Mammary epithelial cell (primary cell): ENCODE measurements at regions of chr15 and their contacts with region 1.

Region 1: DNA sequence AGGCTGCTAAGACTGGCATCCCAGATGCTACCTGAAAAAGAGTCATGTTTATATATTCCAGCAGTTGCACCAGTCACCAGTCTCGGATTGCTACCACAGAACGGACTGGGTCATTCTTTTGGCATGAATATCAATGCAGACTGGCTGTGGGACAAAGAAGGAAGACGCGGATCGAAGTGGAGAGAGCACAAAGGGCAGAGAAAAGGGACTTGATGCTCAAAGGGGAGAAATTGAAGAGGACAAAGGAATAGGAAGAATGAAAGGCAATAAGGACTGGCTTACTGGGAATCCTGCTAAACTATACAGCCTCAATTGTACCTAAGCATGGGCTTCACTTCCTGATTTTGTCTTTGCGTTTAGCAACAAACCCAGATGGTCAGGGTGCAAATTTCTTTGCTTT is 15.3 kb upstream of the DIS3L start:
- DNase-seq: no peak
- H3K4me3 ChIP-seq: no peak overlapping the region
- H3K27ac ChIP-seq: no peak overlapping the region
- H3K4me1 ChIP-seq: no peaks in the 10 kb centered on the region
- H3K27me3 ChIP-seq: peaks cover 4% of the 10 kb centered on the region
- CTCF ChIP-seq: no peak

Region 2: DNA sequence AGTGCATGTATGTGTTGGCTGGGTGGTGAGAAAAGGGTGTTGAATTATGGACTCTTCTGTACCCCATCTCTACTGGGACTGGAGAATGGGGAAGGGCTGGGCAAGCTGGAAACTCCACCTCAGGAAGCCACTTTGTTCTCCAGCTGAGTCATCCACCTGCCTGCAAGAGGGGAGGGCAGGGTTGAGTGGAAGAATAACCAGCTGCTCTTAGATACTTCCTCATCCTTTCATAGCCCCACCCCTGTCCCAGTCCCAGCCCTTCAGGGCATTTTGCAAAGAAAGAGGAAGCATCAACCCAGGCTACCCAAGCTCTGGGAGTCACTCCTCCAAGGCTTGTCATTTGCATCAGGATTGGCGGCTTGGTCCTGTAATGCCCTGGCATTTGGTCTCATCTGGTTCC is 375.7 kb before region 1 on chr15:
- CTCF ChIA-PET with region 1: no interaction called
- dilution Hi-C with region 1: no loop called
- in situ Hi-C with region 1: no loop called
- intact Hi-C with region 1: no loop called
- DNase-seq: peak; percentile 92
- H3K4me3 ChIP-seq: no peak overlapping the region
- H3K27ac ChIP-seq: no peak overlapping the region
- H3K4me1 ChIP-seq: peaks cover 29% of the 10 kb centered on the region
- H3K27me3 ChIP-seq: no peaks in the 10 kb centered on the region
- CTCF ChIP-seq: no peak

Region 3: DNA sequence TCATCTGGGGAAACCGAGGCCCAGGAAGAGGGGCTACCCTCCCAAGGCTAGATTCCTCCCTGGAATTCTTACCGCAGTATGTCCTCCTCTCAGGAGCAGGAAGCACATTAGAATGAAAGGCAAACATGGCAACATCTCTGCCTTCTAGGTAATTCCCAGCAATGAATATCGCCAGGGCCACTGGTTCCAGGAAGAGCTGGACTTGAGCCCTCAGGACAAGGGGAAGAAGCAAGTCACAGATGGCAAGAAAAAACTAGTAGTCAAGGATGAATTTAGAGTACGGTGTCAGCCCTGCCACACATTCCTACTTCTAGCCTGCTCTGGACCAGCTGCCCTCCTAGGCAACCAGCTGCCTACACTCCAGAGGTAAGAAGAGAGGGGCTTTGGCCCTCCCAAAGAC is 67.4 kb before region 1 on chr15:
- CTCF ChIA-PET with region 1: no interaction called
- dilution Hi-C with region 1: no loop called
- in situ Hi-C with region 1: no loop called
- intact Hi-C with region 1: no loop called
- DNase-seq: no peak
- H3K4me3 ChIP-seq: no peak overlapping the region
- H3K27ac ChIP-seq: no peak overlapping the region
- H3K4me1 ChIP-seq: no peaks in the 10 kb centered on the region
- H3K27me3 ChIP-seq: no peaks in the 10 kb centered on the region
- CTCF ChIP-seq: no peak

Region 4: GRCh38 chr15:66221126-66221525 is 56.9 kb before region 1 on chr15:
- CTCF ChIA-PET with region 1: no interaction called
- dilution Hi-C with region 1: loop called (anchors 5 kb)
- in situ Hi-C with region 1: no loop called
- intact Hi-C with region 1: no loop called
- DNase-seq: no peak
- H3K4me3 ChIP-seq: no peak overlapping the region
- H3K27ac ChIP-seq: no peak overlapping the region
- H3K4me1 ChIP-seq: no peaks in the 10 kb centered on the region
- H3K27me3 ChIP-seq: no peaks in the 10 kb centered on the region
- CTCF ChIP-seq: no peak

Region 5: DNA sequence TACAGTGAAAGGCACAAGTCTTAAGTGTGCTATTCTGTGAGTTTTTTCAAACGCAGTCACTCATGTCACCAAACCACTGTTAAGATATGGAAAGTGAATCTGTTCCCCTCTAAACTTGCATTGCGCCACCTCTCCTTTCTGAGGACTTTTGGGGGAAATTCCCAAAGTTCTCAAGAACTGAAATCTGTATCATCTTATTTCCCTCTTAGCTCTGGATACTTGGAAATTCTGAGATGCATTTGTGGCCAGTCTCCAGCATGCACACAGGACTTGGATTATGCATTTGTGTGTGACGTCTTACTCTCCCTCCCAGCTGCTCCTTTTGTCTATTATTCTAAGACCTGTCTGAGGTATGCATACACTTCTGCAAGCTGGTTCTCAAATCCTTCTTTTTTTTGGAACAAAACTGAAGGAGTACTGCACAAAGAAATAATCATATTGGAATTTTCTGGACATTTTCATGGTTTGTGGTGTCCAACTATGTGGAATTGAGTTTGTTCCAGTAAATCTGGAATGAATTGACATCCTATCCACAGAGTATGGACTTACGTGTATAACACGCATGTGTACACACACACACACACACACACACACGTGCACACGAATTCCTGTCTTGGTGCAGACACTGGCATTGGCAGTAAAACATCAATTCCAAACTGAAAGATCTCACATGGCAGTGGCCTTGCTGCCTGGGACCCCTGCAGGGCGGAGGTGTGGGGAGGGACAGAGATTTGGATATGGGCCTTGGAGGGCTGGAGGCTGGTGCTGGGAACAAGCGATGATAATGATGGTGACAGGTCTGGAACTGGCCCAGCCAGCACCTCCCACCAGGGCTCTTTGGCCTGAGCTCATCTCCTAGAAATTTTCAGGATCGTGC is 295.9 kb after region 1 on chr15:
- CTCF ChIA-PET with region 1: no interaction called
- dilution Hi-C with region 1: no loop called
- in situ Hi-C with region 1: no loop called
- intact Hi-C with region 1: no loop called
- DNase-seq: no peak
- H3K4me3 ChIP-seq: no peak overlapping the region
- H3K27ac ChIP-seq: no peak overlapping the region
- H3K4me1 ChIP-seq: no peaks in the 10 kb centered on the region
- H3K27me3 ChIP-seq: no peaks in the 10 kb centered on the region
- CTCF ChIP-seq: no peak